Activated CD4-positive, alpha-beta memory T cell treated with anti-CD3 and anti-CD28 coated beads, Interleukin-2, amount 10 ng/mL, durations not matched to agents 7 days and 5 days (primary cell): ENCODE measurements at regions of chr2 and their contacts with region 1.

Region 1: DNA sequence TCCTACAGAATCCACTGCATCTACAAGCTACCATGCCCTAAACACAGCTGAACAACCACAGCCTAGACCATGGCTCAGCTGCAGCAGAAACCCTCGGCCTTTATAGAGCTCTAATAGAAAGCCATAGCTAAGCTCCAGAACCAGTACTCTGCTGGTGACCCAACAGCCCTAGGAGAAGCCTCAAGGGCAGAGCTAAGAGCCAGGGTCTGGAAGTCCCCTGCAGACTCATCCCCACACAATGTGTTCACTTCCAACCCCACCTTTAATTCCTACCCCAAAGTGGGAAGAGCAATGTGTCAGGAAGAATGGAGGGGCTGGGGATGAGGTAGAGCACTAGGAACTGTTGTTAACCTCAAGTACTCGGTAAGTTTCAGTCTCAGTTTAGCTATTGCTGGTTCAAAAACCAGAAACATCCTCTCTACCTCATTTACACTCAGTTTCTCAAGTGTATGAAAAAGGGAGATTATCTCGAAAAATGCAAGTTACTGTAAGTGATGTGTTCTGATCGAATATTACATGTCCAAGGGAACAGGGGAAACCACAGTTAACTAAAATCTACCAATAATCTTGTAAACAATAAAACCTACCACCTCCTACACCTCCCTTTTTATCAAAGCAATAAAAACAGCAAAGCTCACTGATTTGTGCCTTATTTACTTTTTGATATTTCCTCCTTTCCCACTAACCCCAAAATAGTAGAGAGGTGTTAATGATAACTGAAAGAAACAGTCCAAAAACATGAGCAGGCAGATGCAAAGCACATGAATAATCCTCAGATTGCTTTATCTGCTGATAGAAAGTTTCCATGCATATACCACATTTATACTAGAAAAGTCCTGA is 36.2 kb downstream of the THADA start:
- DNase-seq: no peak
- H3K4me3 Mint-ChIP-seq: peak overlapping the region; percentile 11
- H3K27ac Mint-ChIP-seq: peak overlapping the region; percentile 83
- H3K4me1 Mint-ChIP-seq: peaks cover 64% of the 10 kb centered on the region
- H3K27me3 Mint-ChIP-seq: no peaks in the 10 kb centered on the region

Region 2: GRCh38 chr2:43569921-43570320 is 10.3 kb after region 1 on chr2:
- CTCF ChIA-PET with region 1: interaction called, 10 read pairs
- POLR2A ChIA-PET with region 1: interaction called, 15 read pairs
- DNase-seq: peak; percentile 40
- H3K4me3 Mint-ChIP-seq: no peak overlapping the region
- H3K27ac Mint-ChIP-seq: peak overlapping the region; percentile 72
- H3K4me1 Mint-ChIP-seq: peaks cover 54% of the 10 kb centered on the region
- H3K27me3 Mint-ChIP-seq: no peaks in the 10 kb centered on the region

Region 3: DNA sequence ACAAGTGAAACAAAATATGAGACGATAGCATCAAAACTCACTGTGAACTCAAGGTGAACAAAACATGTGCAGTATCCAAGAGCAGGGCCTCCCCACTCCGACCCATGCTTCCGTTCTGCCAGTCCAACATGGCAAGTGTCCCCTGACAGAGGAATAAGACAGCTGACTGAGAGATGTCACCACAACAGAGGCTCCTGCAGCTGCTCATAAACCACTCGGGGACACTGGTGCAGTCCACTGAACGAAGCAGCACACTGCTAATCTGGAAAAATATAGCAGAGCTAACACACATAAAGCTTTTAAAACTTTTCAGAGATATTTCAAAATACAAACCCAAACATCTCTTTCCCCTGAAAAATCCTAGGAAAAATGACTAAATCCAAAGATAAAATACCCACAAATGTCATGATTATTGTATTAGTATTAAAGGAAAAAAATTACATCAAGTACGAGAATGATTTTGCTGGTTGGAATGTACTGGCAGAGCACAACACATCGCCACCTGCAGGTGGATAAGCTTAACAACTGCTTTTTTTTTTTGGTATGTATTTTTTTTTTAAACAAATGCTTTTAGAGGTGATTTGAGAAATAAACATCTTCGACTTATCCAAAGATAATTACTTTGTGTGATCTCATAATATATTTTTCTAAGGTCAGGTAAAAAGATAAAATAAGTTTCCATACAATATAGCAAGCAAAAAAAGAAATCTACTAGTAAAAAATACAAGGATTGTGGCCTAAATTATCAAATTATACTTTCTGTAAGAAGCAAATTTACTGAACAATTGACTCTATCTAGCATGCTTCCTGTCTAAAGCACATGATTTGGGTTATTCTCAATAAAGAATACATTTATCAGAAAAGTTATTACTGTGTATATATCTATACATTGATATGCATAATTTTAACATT is 17.6 kb after region 1 on chr2:
- CTCF ChIA-PET with region 1: interaction called, 31 read pairs
- POLR2A ChIA-PET with region 1: interaction called, 6 read pairs
- DNase-seq: peak; percentile 30
- H3K4me3 Mint-ChIP-seq: no peak overlapping the region
- H3K27ac Mint-ChIP-seq: no peak overlapping the region
- H3K4me1 Mint-ChIP-seq: peaks cover 21% of the 10 kb centered on the region
- H3K27me3 Mint-ChIP-seq: no peaks in the 10 kb centered on the region

Region 4: GRCh38 chr2:43676322-43677050 is 116.9 kb after region 1 on chr2 and contains the start of gene C1GALT1C1L:
- CTCF ChIA-PET with region 1: no interaction called
- POLR2A ChIA-PET with region 1: no interaction called
- DNase-seq: no peak
- H3K4me3 Mint-ChIP-seq: peak within 1 kb of the TSS; percentile 21
- H3K27ac Mint-ChIP-seq: no peak within 1 kb of the TSS
- H3K4me1 Mint-ChIP-seq: peaks cover 2% of the 10 kb centered on the region
- H3K27me3 Mint-ChIP-seq: peaks cover 30% of the 10 kb centered on the region
- total RNA-seq, gene C1GALT1C1L: not detected